ENCODE measurements at regions of chr15 and their contacts with region 1.

Region 1: DNA sequence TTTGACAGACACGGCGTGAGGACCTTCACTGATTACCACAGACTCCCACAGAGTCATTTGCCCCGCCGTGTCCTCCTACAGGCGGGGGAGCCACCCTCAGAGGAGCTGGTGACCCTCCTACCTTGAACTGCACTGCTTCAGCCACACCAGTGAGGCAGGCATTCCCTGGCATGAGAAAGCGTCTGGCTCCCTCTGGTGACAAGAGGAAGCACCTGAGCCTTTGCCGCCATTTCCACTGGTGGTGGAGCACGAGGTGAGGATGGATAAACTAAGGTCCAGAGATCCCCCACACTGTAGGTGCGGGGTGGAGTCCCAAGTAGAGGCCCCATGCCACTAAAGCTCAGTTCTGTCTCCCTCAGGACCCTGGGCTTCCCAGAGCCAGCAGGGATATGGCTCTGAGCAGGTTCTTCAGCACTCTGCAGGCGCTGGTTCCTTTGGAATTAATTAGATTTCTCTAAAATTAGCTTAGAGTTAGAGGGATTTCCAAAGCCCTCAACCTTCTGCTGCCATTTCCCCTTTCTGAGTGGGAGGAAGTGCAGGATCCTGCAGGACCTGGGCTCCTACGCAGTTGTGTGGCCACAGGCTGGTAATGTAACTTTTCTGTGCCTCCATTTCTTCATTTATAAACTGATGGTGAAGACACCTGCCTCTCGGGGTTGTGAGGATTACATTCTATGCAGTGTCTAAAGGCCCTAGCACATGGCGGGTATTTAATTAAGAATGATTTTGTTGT is 224.0 kb downstream of the SLCO3A1 start:
- DNase-seq: peak; percentile 78 to 84
- ATAC-seq: peak; percentile 81 to 90
- H3K4me3 ChIP-seq: no peak overlapping the region
- H3K27ac ChIP-seq: no peak overlapping the region
- H3K4me1 ChIP-seq: peaks cover 6% of the 10 kb centered on the region; the same call in 2 of the 3 replicates
- CTCF ChIP-seq: peak; percentile 84
- EP300 ChIP-seq: no peak
- POLR2A ChIP-seq: no peak
- RAD21 ChIP-seq: peak; percentile 96 to 98

Region 2: GRCh38 chr15:91302588-91303439 is 774.7 kb before region 1 on chr15:
- CTCF ChIA-PET with region 1: interaction called, 106 read pairs
- POLR2A ChIA-PET with region 1: no interaction called
- DNase-seq: peak; percentile 71 to 80
- ATAC-seq: peak; percentile 75 to 95; a peak in 5 of 6 replicates
- H3K4me3 ChIP-seq: no peak overlapping the region
- H3K27ac ChIP-seq: no peak overlapping the region
- H3K4me1 ChIP-seq: no peaks in the 10 kb centered on the region
- CTCF ChIP-seq: peak; percentile 94
- EP300 ChIP-seq: no peak
- POLR2A ChIP-seq: no peak
- RAD21 ChIP-seq: peak; percentile 95 to 96

Region 3: GRCh38 chr15:91867581-91868026 is 209.9 kb before region 1 on chr15:
- CTCF ChIA-PET with region 1: interaction called, 11 read pairs
- POLR2A ChIA-PET with region 1: no interaction called
- DNase-seq: peak; percentile 73 to 78
- ATAC-seq: peak; percentile 98 to 99
- H3K4me3 ChIP-seq: no peak overlapping the region
- H3K27ac ChIP-seq: peak overlapping the region; percentile 40 to 79
- H3K4me1 ChIP-seq: peaks cover 28% of the 10 kb centered on the region
- CTCF ChIP-seq: no peak
- EP300 ChIP-seq: no peak
- POLR2A ChIP-seq: no peak
- RAD21 ChIP-seq: no peak

Region 4: GRCh38 chr15:91981821-91982801 is 95.4 kb before region 1 on chr15:
- CTCF ChIA-PET with region 1: interaction called, 14 read pairs
- POLR2A ChIA-PET with region 1: no interaction called
- DNase-seq: peak in 1 of 2 experiments; percentile 17
- ATAC-seq: peak; percentile 62 to 72; a peak in 4 of 6 replicates
- H3K4me3 ChIP-seq: no peak overlapping the region
- H3K27ac ChIP-seq: no peak overlapping the region
- H3K4me1 ChIP-seq: no peaks in the 10 kb centered on the region
- CTCF ChIP-seq: peak; percentile 49
- EP300 ChIP-seq: no peak
- POLR2A ChIP-seq: no peak
- RAD21 ChIP-seq: peak; percentile 66 to 70

Region 5: GRCh38 chr15:92091155-92091734 is 13.7 kb after region 1 on chr15:
- CTCF ChIA-PET with region 1: interaction called, 44 read pairs
- POLR2A ChIA-PET with region 1: no interaction called
- DNase-seq: peak; percentile 46 to 60
- ATAC-seq: peak; percentile 86 to 98
- H3K4me3 ChIP-seq: no peak overlapping the region
- H3K27ac ChIP-seq: no peak overlapping the region
- H3K4me1 ChIP-seq: no peaks in the 10 kb centered on the region
- CTCF ChIP-seq: peak; percentile 65
- EP300 ChIP-seq: no peak
- POLR2A ChIP-seq: no peak
- RAD21 ChIP-seq: peak; percentile 57 to 68